ENCODE measurements at regions of chr2 and their contacts with region 1.

Region 1: DNA sequence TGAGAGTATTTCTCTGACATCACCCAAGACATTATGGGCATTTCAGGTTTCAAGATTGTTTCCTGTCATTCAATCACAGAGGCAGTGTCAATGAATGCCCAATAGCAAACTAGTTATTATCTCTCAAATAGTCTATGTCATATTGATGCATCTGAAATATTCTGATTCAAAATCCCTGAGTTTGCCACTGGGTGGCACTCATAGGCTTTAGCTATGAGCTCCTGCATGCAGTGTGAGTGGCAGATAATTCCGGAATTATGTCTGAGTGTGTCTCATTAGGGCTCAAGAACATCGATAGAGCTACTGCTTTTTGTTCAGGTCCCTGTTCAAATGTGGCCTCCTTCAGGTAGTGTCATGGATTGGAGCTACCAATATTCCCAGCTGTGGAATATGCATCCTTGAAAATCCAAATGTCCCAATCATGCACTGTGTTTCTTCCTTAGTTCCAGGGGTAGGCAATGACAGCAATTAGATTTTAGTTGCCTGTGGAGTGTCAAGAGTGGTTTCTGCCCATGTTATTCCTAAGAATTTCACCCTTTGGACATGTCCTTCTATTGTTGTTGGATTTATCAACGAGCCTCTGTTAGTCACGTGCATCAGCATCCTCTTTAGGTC is 7.8 kb upstream of the OR6B3 start:
- DNase-seq: peak in 3 of 10 donors; percentile 32 to 61 (median 34)

Region 2: GRCh38 chr2:240143801-240144648 is 82.9 kb after region 1 on chr2:
- intact Hi-C with region 1: loop called (anchors 1 kb)
- DNase-seq: peak; percentile 74 to 97 (median 86)